CD4-positive, alpha-beta T cell (primary cell): ENCODE measurements at regions of chr10 and their contacts with region 1.

Region 1: GRCh38 chr10:80382989-80383388 is 25.4 kb upstream of the PRXL2A start:
- DNase-seq: peak; percentile 29 to 76 (median 44)
- ATAC-seq: peak; percentile 63
- H3K4me3 ChIP-seq: no peak overlapping the region
- H3K4me3 Mint-ChIP-seq: no peak overlapping the region
- H3K27ac ChIP-seq: no peak overlapping the region
- H3K27ac Mint-ChIP-seq: peak overlapping the region; percentile 3
- H3K4me1 ChIP-seq: peaks cover 10% of the 10 kb centered on the region
- H3K4me1 Mint-ChIP-seq: peaks cover 25% of the 10 kb centered on the region
- H3K27me3 ChIP-seq: no peaks in the 10 kb centered on the region
- H3K27me3 Mint-ChIP-seq: no peaks in the 10 kb centered on the region
- CTCF ChIP-seq: peak; percentile 92

Region 2: GRCh38 chr10:80289451-80290287 is 93.3 kb before region 1 on chr10 and contains the start of gene MAT1A:
- CTCF ChIA-PET with region 1: no interaction called
- POLR2A ChIA-PET with region 1: no interaction called
- intact Hi-C with region 1: no loop called
- DNase-seq: no peak
- ATAC-seq: no peak
- H3K4me3 ChIP-seq: no peak within 1 kb of the TSS
- H3K4me3 Mint-ChIP-seq: no peak within 1 kb of the TSS
- H3K27ac ChIP-seq: no peak within 1 kb of the TSS
- H3K27ac Mint-ChIP-seq: no peak within 1 kb of the TSS
- H3K4me1 ChIP-seq: no peaks in the 10 kb centered on the region
- H3K4me1 Mint-ChIP-seq: no peaks in the 10 kb centered on the region
- H3K27me3 ChIP-seq: peaks cover 0 to 8% of the 10 kb centered on the region in 2 experiments
- H3K27me3 Mint-ChIP-seq: peaks cover 23% of the 10 kb centered on the region
- CTCF ChIP-seq: no peak
- total RNA-seq, gene MAT1A: not detected

Region 3: DNA sequence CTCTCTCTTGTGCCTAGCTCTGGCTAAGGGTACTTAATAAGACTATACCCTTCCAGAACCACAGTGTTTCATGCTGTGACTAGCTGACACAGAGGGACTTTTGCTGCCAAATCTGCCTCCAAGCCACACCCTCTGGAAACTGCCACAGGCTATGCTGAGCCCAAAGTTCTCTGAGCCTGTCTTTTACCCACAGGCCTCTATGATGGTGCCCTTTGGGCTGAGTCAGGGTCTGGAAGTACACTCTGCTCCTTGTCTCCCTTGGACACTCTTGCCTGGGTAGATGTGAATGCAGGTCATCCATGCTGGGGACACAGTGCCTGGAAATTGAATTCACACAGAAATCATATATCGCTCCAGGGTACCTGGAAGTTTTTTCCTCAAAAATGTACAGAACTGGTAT is 49.0 kb before region 1 on chr10:
- CTCF ChIA-PET with region 1: no interaction called
- POLR2A ChIA-PET with region 1: no interaction called
- intact Hi-C with region 1: no loop called
- DNase-seq: no peak
- ATAC-seq: no peak
- H3K4me3 ChIP-seq: no peak overlapping the region
- H3K4me3 Mint-ChIP-seq: no peak overlapping the region
- H3K27ac ChIP-seq: no peak overlapping the region
- H3K27ac Mint-ChIP-seq: no peak overlapping the region
- H3K4me1 ChIP-seq: no peaks in the 10 kb centered on the region
- H3K4me1 Mint-ChIP-seq: no peaks in the 10 kb centered on the region
- H3K27me3 ChIP-seq: peaks cover 7 to 13% of the 10 kb centered on the region in 2 experiments
- H3K27me3 Mint-ChIP-seq: no peaks in the 10 kb centered on the region
- CTCF ChIP-seq: no peak

Region 4: DNA sequence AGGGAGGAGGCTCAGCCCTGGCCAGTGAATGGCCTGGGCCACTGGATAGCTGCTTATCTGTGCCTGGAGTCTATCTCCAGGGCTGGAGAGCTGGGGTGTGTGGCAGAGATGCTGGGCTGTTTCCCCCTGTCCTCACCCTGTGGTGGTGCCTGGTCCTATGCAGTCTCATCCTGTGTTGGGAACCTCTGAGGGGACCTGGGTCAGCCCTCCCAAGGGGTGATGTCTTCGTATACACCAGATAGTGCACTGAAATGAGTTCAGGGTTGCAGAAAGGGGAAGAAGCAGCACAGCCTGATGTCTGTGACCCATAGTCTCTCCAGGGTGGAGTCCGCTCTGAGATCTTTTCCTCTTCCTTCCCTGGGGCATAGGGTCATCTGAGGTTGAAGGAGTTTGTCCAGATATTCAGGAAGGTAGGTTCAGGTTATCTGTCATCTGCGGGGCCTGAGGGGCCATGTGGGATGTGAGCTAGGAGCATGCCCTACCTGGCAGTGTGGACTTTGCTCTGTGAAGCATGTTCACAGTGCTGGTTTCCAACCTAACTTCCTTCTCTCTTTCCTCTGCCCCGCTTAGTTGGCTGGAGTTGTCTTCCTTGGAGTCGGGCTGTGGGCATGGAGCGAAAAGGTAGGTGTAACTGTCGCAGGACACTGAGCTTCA is 121.3 kb after region 1 on chr10:
- CTCF ChIA-PET with region 1: interaction called, 36 read pairs
- POLR2A ChIA-PET with region 1: interaction called, 16 read pairs
- intact Hi-C with region 1: loop called (anchors 1 kb)
- DNase-seq: no peak
- ATAC-seq: no peak
- H3K4me3 ChIP-seq: no peak overlapping the region
- H3K4me3 Mint-ChIP-seq: peak overlapping the region; percentile 68
- H3K27ac ChIP-seq: peak overlapping the region; percentile 46 to 54
- H3K27ac Mint-ChIP-seq: peak overlapping the region; percentile 78
- H3K4me1 ChIP-seq: peaks cover 72% of the 10 kb centered on the region
- H3K4me1 Mint-ChIP-seq: peaks cover 82% of the 10 kb centered on the region
- H3K27me3 ChIP-seq: no peaks in the 10 kb centered on the region
- H3K27me3 Mint-ChIP-seq: no peaks in the 10 kb centered on the region
- CTCF ChIP-seq: no peak

Region 5: DNA sequence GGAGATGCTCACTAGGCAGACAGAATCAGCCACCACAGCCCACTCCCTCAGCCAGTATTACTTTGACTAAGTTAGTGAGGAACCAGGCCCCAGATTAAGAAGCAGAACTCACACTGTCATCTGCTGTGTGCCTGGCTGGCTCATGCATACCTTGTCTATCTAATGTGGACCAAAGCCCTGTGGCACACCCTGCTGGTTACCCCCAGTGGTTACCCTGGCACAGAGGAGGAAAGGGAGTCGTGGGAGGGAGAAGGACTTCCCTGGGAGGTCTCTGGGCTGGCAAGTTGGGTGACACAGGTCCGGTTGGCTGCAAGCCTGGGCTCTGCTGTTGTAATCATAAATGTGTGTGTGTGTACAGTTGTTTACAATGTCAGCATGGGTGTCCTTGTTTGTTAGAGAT is 147.3 kb after region 1 on chr10:
- CTCF ChIA-PET with region 1: interaction called, 5 read pairs
- POLR2A ChIA-PET with region 1: no interaction called
- intact Hi-C with region 1: loop called in 1 of 2 experiments (anchors 2 kb)
- DNase-seq: peak in 10 of 14 experiments; percentile 27 to 75 (median 46)
- ATAC-seq: peak; percentile 66
- H3K4me3 ChIP-seq: no peak overlapping the region
- H3K4me3 Mint-ChIP-seq: peak overlapping the region; percentile 78
- H3K27ac ChIP-seq: peak overlapping the region in 1 of 2 donors; percentile 4
- H3K27ac Mint-ChIP-seq: peak overlapping the region; percentile 89
- H3K4me1 ChIP-seq: peaks cover 73% of the 10 kb centered on the region
- H3K4me1 Mint-ChIP-seq: peaks cover 74% of the 10 kb centered on the region
- H3K27me3 ChIP-seq: no peaks in the 10 kb centered on the region
- H3K27me3 Mint-ChIP-seq: no peaks in the 10 kb centered on the region
- CTCF ChIP-seq: peak; percentile 49

Region 6: GRCh38 chr10:80580638-80581468 is 197.9 kb after region 1 on chr10:
- CTCF ChIA-PET with region 1: interaction called, 3 read pairs
- POLR2A ChIA-PET with region 1: no interaction called
- intact Hi-C with region 1: loop called in 1 of 2 experiments (anchors 5 kb)
- DNase-seq: no peak
- ATAC-seq: no peak
- H3K4me3 ChIP-seq: no peak overlapping the region
- H3K4me3 Mint-ChIP-seq: no peak overlapping the region
- H3K27ac ChIP-seq: no peak overlapping the region
- H3K27ac Mint-ChIP-seq: no peak overlapping the region
- H3K4me1 ChIP-seq: no peaks in the 10 kb centered on the region
- H3K4me1 Mint-ChIP-seq: no peaks in the 10 kb centered on the region
- H3K27me3 ChIP-seq: no peaks in the 10 kb centered on the region
- H3K27me3 Mint-ChIP-seq: peaks cover 2% of the 10 kb centered on the region
- CTCF ChIP-seq: no peak

Region 7: DNA sequence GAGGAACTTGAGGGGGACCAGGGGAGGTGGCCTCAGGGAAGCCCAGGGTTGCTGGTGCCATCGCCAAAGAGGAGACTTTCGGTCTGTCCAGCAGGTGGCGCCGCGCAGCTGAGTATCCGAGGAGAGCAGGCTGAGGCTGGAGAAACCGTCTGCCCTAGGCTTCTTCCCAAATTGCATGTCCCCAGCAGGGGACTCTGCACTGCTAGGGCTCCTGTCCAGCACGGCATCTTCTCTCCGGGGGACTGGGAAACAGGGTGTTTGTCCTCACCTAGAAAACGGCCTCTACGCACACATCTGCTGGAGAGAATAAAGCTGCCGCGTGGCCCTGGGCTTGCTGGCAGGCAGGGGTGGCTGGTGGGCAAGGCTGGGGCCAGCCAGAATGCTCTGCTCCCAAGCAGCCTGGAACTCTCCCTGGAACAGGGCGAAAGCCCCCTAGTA is 316.6 kb after region 1 on chr10:
- CTCF ChIA-PET with region 1: no interaction called
- POLR2A ChIA-PET with region 1: no interaction called
- intact Hi-C with region 1: loop called in 1 of 2 experiments (anchors 10 kb)
- DNase-seq: peak; percentile 49 to 77 (median 60)
- ATAC-seq: peak; percentile 62
- H3K4me3 ChIP-seq: no peak overlapping the region
- H3K4me3 Mint-ChIP-seq: no peak overlapping the region
- H3K27ac ChIP-seq: no peak overlapping the region
- H3K27ac Mint-ChIP-seq: no peak overlapping the region
- H3K4me1 ChIP-seq: peaks cover 3% of the 10 kb centered on the region
- H3K4me1 Mint-ChIP-seq: no peaks in the 10 kb centered on the region
- H3K27me3 ChIP-seq: no peaks in the 10 kb centered on the region
- H3K27me3 Mint-ChIP-seq: no peaks in the 10 kb centered on the region
- CTCF ChIP-seq: peak; percentile 84

Region 8: GRCh38 chr10:80924063-80924952 is 541.3 kb after region 1 on chr10:
- CTCF ChIA-PET with region 1: no interaction called
- POLR2A ChIA-PET with region 1: no interaction called
- intact Hi-C with region 1: loop called in 1 of 2 experiments (anchors 2 kb)
- DNase-seq: peak in 4 of 14 experiments; percentile 13 to 36 (median 21)
- ATAC-seq: no peak
- H3K4me3 ChIP-seq: no peak overlapping the region
- H3K4me3 Mint-ChIP-seq: no peak overlapping the region
- H3K27ac ChIP-seq: no peak overlapping the region
- H3K27ac Mint-ChIP-seq: no peak overlapping the region
- H3K4me1 ChIP-seq: no peaks in the 10 kb centered on the region
- H3K4me1 Mint-ChIP-seq: no peaks in the 10 kb centered on the region
- H3K27me3 ChIP-seq: no peaks in the 10 kb centered on the region
- H3K27me3 Mint-ChIP-seq: peaks cover 21% of the 10 kb centered on the region
- CTCF ChIP-seq: peak; percentile 30

Region 9: GRCh38 chr10:81018708-81019365 is 635.8 kb after region 1 on chr10:
- CTCF ChIA-PET with region 1: no interaction called
- POLR2A ChIA-PET with region 1: no interaction called
- intact Hi-C with region 1: loop called in 1 of 2 experiments (anchors 2 kb)
- DNase-seq: peak in 4 of 14 experiments; percentile 2 to 25 (median 14)
- ATAC-seq: no peak
- H3K4me3 ChIP-seq: no peak overlapping the region
- H3K4me3 Mint-ChIP-seq: no peak overlapping the region
- H3K27ac ChIP-seq: no peak overlapping the region
- H3K27ac Mint-ChIP-seq: no peak overlapping the region
- H3K4me1 ChIP-seq: no peaks in the 10 kb centered on the region
- H3K4me1 Mint-ChIP-seq: no peaks in the 10 kb centered on the region
- H3K27me3 ChIP-seq: peaks cover 0 to 4% of the 10 kb centered on the region in 2 experiments
- H3K27me3 Mint-ChIP-seq: peaks cover 8% of the 10 kb centered on the region
- CTCF ChIP-seq: peak; percentile 44